ENCODE measurements at regions of chr16 and their contacts with region 1.

Region 1: DNA sequence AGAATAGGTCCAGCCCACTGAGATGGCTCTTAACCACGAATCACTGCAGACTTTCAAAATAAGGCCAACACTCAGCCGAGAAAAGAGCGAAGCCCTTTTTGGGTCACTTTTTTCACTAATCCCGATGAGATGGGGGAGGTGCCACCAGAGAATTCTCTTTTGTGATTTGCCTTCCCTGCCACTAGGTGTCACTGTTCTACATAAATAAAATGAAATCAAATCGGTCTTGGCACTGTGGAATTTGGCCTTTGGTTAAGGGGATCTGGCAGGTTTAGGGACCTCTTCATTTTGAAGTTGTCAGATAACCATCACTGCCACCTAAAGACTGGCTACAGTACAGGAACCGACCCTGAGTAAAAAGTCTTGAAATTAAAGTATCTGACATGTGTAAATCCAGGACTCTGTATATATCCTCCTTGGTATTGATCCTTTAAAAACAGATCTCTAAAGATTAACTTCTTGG is 147.0 kb downstream of the HS3ST4 start:
- DNase-seq: peak; percentile 11
- ATAC-seq: peak; percentile 65
- H3K4me3 ChIP-seq: no peak overlapping the region
- H3K27ac ChIP-seq: no peak overlapping the region
- H3K4me1 ChIP-seq: no peaks in the 10 kb centered on the region
- H3K27me3 ChIP-seq: no peaks in the 10 kb centered on the region
- CTCF ChIP-seq: peak; percentile 63 to 67 (median 63)
- EP300 ChIP-seq: no peak
- POLR2A ChIP-seq: no peak
- RAD21 ChIP-seq: peak; percentile 72

Region 2: DNA sequence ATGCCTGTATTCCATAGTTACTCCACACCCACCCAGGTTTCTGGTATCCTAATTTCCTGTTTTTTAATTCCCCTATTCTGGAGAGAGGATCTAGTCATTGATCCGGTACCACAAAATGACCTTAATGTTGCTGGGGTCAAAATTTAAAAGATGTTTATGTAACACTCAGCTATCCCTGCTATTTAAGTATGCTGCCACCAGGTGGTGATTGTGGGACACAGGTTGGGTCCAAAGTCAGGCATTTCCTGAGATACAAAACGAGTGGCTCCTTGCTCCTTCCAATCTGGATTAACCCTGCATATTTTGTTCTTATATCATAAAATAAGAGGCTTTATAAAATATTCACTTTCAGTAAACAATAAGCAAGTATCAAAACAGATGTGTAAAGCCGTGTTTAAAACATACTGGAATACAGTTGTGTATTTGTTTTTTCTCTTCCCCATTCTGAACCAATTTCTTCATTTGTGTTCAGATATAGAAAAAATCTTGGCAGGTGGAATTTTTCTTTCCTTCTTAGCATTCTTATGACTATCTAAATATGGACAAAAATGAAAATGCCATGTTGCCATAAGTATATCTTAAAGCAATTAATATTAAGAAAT is 130.7 kb before region 1 on chr16:
- CTCF ChIA-PET with region 1: no interaction called
- POLR2A ChIA-PET with region 1: no interaction called
- RAD21 ChIA-PET with region 1: no interaction called
- SMC1A ChIA-PET with region 1: no interaction called
- in situ Hi-C with region 1: no loop called
- intact Hi-C with region 1: no loop called
- DNase-seq: no peak
- ATAC-seq: peak; percentile 57; the same call in 2 of the 3 replicates
- H3K4me3 ChIP-seq: no peak overlapping the region
- H3K27ac ChIP-seq: no peak overlapping the region
- H3K4me1 ChIP-seq: no peaks in the 10 kb centered on the region
- H3K27me3 ChIP-seq: no peaks in the 10 kb centered on the region
- CTCF ChIP-seq: peak; percentile 47 to 70 (median 56); a peak in 5 of 6 replicates
- EP300 ChIP-seq: no peak
- POLR2A ChIP-seq: no peak
- RAD21 ChIP-seq: peak; percentile 35

Region 3: GRCh38 chr16:25729188-25729915 is 109.4 kb before region 1 on chr16:
- CTCF ChIA-PET with region 1: no interaction called
- POLR2A ChIA-PET with region 1: no interaction called
- RAD21 ChIA-PET with region 1: no interaction called
- SMC1A ChIA-PET with region 1: no interaction called
- in situ Hi-C with region 1: no loop called
- intact Hi-C with region 1: no loop called
- DNase-seq: no peak
- ATAC-seq: no peak
- H3K4me3 ChIP-seq: no peak overlapping the region
- H3K27ac ChIP-seq: no peak overlapping the region
- H3K4me1 ChIP-seq: no peaks in the 10 kb centered on the region
- H3K27me3 ChIP-seq: no peaks in the 10 kb centered on the region
- CTCF ChIP-seq: no peak
- EP300 ChIP-seq: no peak
- POLR2A ChIP-seq: no peak
- RAD21 ChIP-seq: no peak

Region 4: GRCh38 chr16:26453215-26453614 is 614.5 kb after region 1 on chr16:
- CTCF ChIA-PET with region 1: interaction called, 3 read pairs
- POLR2A ChIA-PET with region 1: no interaction called
- RAD21 ChIA-PET with region 1: no interaction called
- SMC1A ChIA-PET with region 1: no interaction called
- in situ Hi-C with region 1: no loop called
- intact Hi-C with region 1: loop called (anchors 5 kb)
- DNase-seq: no peak
- ATAC-seq: no peak
- H3K4me3 ChIP-seq: no peak overlapping the region
- H3K27ac ChIP-seq: no peak overlapping the region
- H3K4me1 ChIP-seq: no peaks in the 10 kb centered on the region
- H3K27me3 ChIP-seq: no peaks in the 10 kb centered on the region
- CTCF ChIP-seq: peak in 1 of 3 experiments; percentile 14; a peak in 1 of 6 replicates
- EP300 ChIP-seq: no peak
- POLR2A ChIP-seq: no peak
- RAD21 ChIP-seq: peak; percentile 10; the same call in 1 of the 2 replicates

Region 5: DNA sequence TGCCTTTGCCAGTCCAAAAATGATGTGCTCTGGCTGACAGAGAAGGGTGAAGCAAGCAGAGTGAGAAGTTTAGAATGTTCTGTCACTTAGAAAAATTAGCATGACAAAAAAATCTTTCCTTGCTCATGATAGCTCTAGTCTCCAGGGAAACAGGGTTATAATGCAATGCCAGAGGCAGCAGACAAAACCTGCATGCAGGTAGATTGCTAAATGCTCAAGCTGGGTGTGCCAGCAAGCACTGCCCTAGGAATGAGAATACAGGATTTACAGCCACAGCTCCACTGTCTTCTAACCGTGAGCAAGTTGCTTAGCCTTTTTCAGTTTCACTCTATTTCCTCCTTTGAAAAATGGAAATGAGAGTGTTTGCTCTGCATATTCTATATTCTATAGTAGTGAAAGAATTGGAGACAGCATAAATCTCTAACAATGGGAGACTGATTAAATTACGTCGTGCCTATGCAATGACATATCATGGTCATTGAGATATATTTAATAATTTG is 711.4 kb after region 1 on chr16:
- CTCF ChIA-PET with region 1: no interaction called
- POLR2A ChIA-PET with region 1: no interaction called
- RAD21 ChIA-PET with region 1: no interaction called
- SMC1A ChIA-PET with region 1: no interaction called
- in situ Hi-C with region 1: no loop called
- intact Hi-C with region 1: loop called (anchors 5 kb)
- DNase-seq: no peak
- ATAC-seq: no peak
- H3K4me3 ChIP-seq: no peak overlapping the region
- H3K27ac ChIP-seq: no peak overlapping the region
- H3K4me1 ChIP-seq: no peaks in the 10 kb centered on the region
- H3K27me3 ChIP-seq: no peaks in the 10 kb centered on the region
- CTCF ChIP-seq: no peak
- EP300 ChIP-seq: no peak
- POLR2A ChIP-seq: no peak
- RAD21 ChIP-seq: no peak

Region 6: GRCh38 chr16:26569793-26570192 is 731.0 kb after region 1 on chr16:
- CTCF ChIA-PET with region 1: interaction called, 3 read pairs
- POLR2A ChIA-PET with region 1: no interaction called
- RAD21 ChIA-PET with region 1: no interaction called
- SMC1A ChIA-PET with region 1: no interaction called
- in situ Hi-C with region 1: no loop called
- intact Hi-C with region 1: loop called (anchors 5 kb)
- DNase-seq: no peak
- ATAC-seq: peak; percentile 40; the same call in 1 of the 3 replicates
- H3K4me3 ChIP-seq: no peak overlapping the region
- H3K27ac ChIP-seq: no peak overlapping the region
- H3K4me1 ChIP-seq: no peaks in the 10 kb centered on the region
- H3K27me3 ChIP-seq: no peaks in the 10 kb centered on the region
- CTCF ChIP-seq: peak in 2 of 3 experiments; percentile 37; a peak in 3 of 6 replicates
- EP300 ChIP-seq: no peak
- POLR2A ChIP-seq: no peak
- RAD21 ChIP-seq: peak; percentile 46

Region 7: DNA sequence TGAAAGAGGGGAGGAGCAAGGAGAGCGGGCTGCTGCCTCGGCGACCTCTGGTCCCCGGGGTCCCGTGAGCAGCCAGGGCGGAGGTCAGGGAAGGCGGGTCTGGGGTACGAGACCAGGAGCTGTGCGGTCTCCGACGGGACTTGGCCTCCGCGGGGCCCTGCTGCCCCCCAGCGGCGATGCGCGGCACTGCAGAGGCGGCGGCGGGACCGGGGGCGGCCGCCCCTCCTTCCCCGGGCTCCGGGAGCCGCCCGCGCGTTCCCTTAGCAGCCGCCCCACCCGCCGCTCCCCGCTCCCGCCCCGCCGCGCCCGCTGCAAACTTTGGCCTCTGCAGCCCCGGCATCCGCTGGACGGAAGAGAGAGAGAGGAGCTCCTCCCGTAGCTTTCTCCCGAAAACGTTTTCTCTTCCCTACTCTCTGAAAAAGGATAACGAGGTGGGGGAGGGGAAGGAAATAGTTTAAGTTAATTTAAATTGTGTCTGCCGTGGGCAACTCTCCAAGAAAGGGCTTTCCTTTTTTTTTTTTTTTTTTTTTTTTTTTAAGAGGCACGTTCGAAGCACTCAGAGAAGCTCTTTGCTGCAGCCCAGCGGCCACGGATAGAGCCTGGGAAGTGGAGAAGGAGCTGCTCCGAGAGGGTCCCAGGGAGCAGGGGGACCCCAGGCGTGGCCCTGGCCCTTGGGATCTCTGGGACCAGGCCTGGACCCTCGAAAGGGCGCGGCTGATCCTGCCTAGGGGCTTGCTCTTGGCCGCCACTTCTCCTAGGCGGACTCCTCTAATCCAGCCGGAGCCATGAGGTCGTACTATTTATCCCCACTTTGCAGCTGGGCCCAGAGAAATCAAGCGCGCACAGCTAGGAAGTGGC is 1271.1 kb after region 1 on chr16:
- CTCF ChIA-PET with region 1: interaction called, 5 read pairs
- POLR2A ChIA-PET with region 1: no interaction called
- RAD21 ChIA-PET with region 1: interaction called, 3 read pairs
- SMC1A ChIA-PET with region 1: no interaction called
- in situ Hi-C with region 1: loop called (anchors 5 kb)
- intact Hi-C with region 1: loop called (anchors 5 kb)
- DNase-seq: no peak
- ATAC-seq: peak; percentile 83
- H3K4me3 ChIP-seq: no peak overlapping the region
- H3K27ac ChIP-seq: no peak overlapping the region
- H3K4me1 ChIP-seq: peaks cover 4% of the 10 kb centered on the region; the same call in 1 of the 2 replicates
- H3K27me3 ChIP-seq: peaks cover 0 to 2% of the 10 kb centered on the region in 2 experiments; a peak in 1 of 4 replicates
- CTCF ChIP-seq: peak; percentile 70 to 87 (median 82)
- EP300 ChIP-seq: no peak
- POLR2A ChIP-seq: no peak
- RAD21 ChIP-seq: peak; percentile 72

Region 8: GRCh38 chr16:27449434-27450195 is 1610.9 kb after region 1 on chr16:
- CTCF ChIA-PET with region 1: no interaction called
- POLR2A ChIA-PET with region 1: no interaction called
- RAD21 ChIA-PET with region 1: no interaction called
- SMC1A ChIA-PET with region 1: no interaction called
- in situ Hi-C with region 1: loop called (anchors 10 kb)
- intact Hi-C with region 1: no loop called
- DNase-seq: no peak
- ATAC-seq: peak; percentile 79
- H3K4me3 ChIP-seq: no peak overlapping the region
- H3K27ac ChIP-seq: peak overlapping the region; percentile 66
- H3K4me1 ChIP-seq: peaks cover 57% of the 10 kb centered on the region
- H3K27me3 ChIP-seq: no peaks in the 10 kb centered on the region
- CTCF ChIP-seq: no peak
- EP300 ChIP-seq: peak; percentile 81; a peak in 3 of 4 replicates
- POLR2A ChIP-seq: peak; percentile 76
- RAD21 ChIP-seq: 0 out of 2 replicates have a peak, but pooled peaks have one; percentile 1

Region 9: DNA sequence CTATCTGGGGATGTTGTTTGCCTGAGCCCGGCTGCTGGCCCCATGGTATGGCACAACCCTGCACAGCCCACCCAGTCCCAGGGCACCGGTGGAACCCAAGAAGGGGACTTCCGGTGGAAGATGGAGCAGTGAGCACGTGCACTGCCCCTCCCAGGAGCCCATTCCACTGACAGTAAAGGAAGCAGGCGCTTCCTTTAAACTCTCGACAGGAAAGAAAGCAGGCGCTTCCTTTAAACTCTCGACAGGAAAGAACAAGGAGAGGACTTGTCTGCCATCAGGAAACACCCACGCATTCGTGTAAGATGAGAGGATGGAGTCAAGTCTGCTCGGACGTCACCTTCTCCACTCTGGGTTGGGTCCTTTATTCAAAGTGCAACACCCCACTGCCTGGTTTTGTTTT is 1616.9 kb after region 1 on chr16:
- CTCF ChIA-PET with region 1: interaction called, 3 read pairs
- POLR2A ChIA-PET with region 1: no interaction called
- RAD21 ChIA-PET with region 1: no interaction called
- SMC1A ChIA-PET with region 1: no interaction called
- in situ Hi-C with region 1: loop called (anchors 10 kb)
- intact Hi-C with region 1: loop called (anchors 5 kb)
- DNase-seq: no peak
- ATAC-seq: no peak
- H3K4me3 ChIP-seq: no peak overlapping the region
- H3K27ac ChIP-seq: no peak overlapping the region
- H3K4me1 ChIP-seq: peaks cover 25% of the 10 kb centered on the region
- H3K27me3 ChIP-seq: no peaks in the 10 kb centered on the region
- CTCF ChIP-seq: no peak
- EP300 ChIP-seq: no peak
- POLR2A ChIP-seq: 0 out of 2 replicates have a peak, but pooled peaks have one; percentile 36
- RAD21 ChIP-seq: no peak

Measured in GM12878 (cell line).